ENCODE measurements at regions of chr1 and their contacts with region 1.

Region 1: DNA sequence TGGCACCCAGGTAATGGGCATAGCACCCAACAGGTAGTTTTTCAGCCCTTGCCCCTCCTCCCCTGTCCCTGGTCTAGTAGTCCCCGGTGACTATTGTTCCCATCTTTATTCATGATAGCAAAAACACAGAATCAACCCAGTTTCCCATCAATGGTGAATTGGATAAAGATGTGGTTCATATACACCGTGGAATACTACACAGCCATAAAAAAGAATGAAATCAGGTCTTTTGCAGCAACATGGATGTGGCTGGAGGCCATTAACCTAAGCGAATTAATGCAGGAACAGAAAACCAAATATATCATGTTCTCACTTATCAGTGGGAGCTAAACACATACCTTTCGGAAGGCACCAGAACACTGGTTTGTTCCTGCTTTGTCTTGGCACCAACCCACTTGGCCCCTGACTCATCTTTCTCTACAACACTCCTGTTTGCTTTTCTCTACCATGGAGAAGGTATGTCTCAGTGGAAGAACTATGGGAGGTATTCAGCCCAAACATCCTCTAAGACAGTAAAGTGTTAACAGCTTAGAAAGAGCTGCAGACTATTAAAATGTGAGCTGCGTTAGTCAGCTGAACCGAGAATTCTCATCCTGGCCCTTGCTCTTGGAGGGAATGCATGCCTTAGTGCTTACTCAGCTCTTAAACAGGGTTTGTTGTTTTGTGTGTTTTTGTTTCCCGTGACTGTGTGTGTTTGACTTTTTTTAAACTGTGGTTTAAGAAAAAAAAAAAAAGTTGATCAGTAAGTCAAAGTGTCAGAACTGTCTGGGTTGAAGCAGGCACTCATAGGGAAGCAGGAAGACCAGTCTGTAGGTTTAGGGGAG is 203.0 kb downstream of the TOMM20 start:
- DNase-seq: no peak
- H3K4me3 Mint-ChIP-seq: peak overlapping the region; percentile 53
- H3K27ac Mint-ChIP-seq: peak overlapping the region; percentile 87
- H3K4me1 Mint-ChIP-seq: peaks cover 40% of the 10 kb centered on the region
- H3K27me3 Mint-ChIP-seq: no peaks in the 10 kb centered on the region

Region 2: DNA sequence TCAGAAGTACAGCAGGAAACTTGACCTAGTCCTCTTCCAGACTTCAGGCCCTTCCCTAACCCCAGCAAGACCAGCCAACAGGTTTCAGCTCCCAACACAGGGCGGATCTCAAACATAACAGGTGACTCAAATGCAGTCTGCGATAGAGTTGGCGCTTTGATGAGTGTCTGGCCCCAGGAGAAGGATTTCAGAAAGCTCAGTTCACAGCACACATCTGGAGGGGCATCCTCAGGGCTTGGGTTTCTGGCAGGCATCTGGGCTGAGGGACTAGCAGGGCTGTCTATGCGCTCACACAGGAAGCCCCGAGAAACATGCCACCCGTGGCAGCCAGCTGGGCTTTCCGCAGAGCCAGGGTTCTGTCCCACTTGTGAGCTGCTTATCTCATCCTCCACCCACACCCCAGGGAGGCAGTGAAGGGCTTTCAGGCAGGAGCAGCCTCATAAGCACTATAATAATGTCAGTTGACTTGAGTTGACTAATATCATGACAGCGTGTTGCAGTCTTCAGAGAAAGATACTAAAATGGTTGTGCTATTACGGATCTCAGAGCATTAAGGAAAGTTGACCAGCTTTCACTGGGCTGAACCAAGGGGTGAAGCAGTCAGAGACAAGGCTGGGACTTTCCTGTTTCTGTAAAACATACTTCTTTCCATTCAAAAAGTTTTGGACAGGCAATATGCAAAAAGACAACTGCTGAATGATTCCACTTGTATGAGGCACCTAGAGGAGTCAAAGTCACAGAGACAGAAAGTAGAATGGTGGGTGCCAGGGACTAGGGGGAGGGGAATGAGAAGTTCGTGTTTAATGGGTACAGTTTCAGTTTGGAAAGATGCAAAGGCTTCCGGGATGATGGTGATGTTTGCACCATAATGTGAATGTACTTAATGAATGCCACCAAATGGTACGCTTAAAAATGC is 82.7 kb before region 1 on chr1:
- CTCF ChIA-PET with region 1: no interaction called
- POLR2A ChIA-PET with region 1: interaction called, 13 read pairs
- DNase-seq: peak; percentile 73
- H3K4me3 Mint-ChIP-seq: peak overlapping the region; percentile 61
- H3K27ac Mint-ChIP-seq: peak overlapping the region; percentile 90
- H3K4me1 Mint-ChIP-seq: peaks cover 79% of the 10 kb centered on the region
- H3K27me3 Mint-ChIP-seq: peaks cover 2% of the 10 kb centered on the region

Region 3: GRCh38 chr1:234955107-234955731 is 29.6 kb after region 1 on chr1:
- CTCF ChIA-PET with region 1: interaction called, 3 read pairs
- POLR2A ChIA-PET with region 1: interaction called, 28 read pairs
- DNase-seq: no peak
- H3K4me3 Mint-ChIP-seq: no peak overlapping the region
- H3K27ac Mint-ChIP-seq: peak overlapping the region; percentile 73
- H3K4me1 Mint-ChIP-seq: peaks cover 46% of the 10 kb centered on the region
- H3K27me3 Mint-ChIP-seq: no peaks in the 10 kb centered on the region

Region 4: DNA sequence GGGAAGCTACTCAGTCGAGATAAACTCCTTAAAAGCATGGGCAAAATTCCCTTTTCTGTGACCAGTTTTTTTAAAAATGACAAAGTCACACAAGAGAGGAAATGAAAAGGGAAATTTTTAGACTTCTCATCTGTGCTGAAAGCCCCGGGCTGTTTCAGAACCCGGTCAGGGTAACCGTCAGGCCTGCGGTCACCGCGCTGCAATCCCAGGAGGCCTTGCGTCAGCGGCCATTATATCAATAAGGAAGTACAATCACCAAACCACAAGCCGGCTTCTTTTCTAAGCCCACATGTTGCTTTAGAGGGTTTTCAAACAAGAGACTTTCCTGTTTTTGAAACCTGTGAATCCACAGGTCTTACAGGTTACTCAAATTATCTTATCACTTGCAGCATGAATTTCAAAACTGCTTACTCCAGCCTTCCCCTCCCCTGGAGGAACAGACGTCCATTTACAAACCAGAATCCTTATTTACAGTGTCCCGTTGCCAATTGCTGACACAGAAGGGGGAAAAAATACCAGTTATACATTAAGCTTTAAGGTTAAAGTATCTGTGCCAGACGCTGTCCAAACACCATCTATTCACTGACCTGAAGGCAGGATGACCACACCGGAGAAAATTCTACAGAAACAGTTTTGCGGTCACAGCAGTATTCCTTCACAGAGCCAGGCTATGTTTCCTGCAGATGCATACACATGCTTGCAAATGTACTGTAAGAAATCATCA is 37.7 kb after region 1 on chr1:
- CTCF ChIA-PET with region 1: interaction called, 3 read pairs
- POLR2A ChIA-PET with region 1: interaction called, 28 read pairs
- DNase-seq: peak; percentile 92
- H3K4me3 Mint-ChIP-seq: peak overlapping the region; percentile 38
- H3K27ac Mint-ChIP-seq: peak overlapping the region; percentile 89
- H3K4me1 Mint-ChIP-seq: peaks cover 65% of the 10 kb centered on the region
- H3K27me3 Mint-ChIP-seq: no peaks in the 10 kb centered on the region

Measured in activated CD4-positive, alpha-beta memory T cell treated with anti-CD3 and anti-CD28 coated beads, Interleukin-2, amount 10 ng/mL, durations not matched to agents 7 days and 5 days (primary cell).